ENCODE measurements at regions of chr3 and their contacts with region 1.

Region 1: GRCh38 chr3:138915503-138916498 is 31.1 kb downstream of the FOXL2 start:
- DNase-seq: peak; percentile 79 to 82
- ATAC-seq: peak; percentile 94 to 96
- H3K4me3 ChIP-seq: peak overlapping the region; percentile 76
- H3K27ac ChIP-seq: peak overlapping the region; percentile 95 to 97
- H3K4me1 ChIP-seq: peaks cover 5% of the 10 kb centered on the region; the same call in 1 of the 3 replicates
- CTCF ChIP-seq: peak; percentile 70
- EP300 ChIP-seq: no peak
- POLR2A ChIP-seq: peak; percentile 18; the same call in 1 of the 2 replicates
- RAD21 ChIP-seq: peak; percentile 69 to 77

Region 2: DNA sequence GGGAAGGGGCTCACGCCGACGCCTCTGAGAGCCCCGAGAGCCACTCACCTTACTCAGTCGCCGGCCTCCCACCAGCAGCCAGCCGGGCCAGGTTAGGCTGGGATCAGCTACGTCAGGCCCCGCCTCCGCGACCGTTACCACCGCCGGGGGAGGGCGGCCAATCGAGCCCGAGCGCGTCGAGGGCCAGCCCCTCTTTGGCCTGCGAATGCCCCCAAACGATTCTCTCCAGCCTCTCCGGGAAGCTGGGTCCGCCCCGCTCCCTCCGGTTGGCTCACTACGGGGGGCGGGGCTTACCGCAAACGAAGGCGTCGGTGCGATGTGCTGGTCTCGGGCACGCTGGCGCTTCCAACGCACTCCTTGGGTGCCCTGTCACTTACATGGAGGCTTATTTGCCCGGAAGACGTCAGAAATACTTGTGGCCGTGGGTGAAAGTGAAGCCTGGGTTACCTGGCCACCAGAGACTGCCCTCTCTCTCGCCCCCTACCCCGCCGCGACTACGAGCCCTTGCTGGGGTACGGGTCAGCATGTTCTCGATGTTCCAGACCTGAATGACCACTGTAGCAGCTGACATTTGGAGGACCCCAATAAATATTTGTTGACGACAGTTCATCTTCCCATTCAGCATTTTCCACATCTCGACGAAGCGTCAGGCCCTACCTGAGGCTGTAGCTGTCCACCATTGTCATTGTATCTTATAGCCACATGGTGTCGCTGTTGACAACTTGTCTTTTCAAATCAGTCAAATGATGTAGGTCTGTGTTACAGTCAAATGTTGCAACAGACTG is 321.5 kb before region 1 on chr3 and contains the start of gene CEP70:
- CTCF ChIA-PET with region 1: interaction called, 224 read pairs
- POLR2A ChIA-PET with region 1: interaction called, 28 read pairs
- DNase-seq: peak; percentile 68 to 91
- ATAC-seq: peak; percentile 98 to 99
- H3K4me3 ChIP-seq: peak within 1 kb of the TSS; percentile 79
- H3K27ac ChIP-seq: peak within 1 kb of the TSS; percentile 89 to 92
- H3K4me1 ChIP-seq: peaks cover 23% of the 10 kb centered on the region
- CTCF ChIP-seq: peak; percentile 83
- EP300 ChIP-seq: no peak
- POLR2A ChIP-seq: peak; percentile 57; the same call in 1 of the 2 replicates
- RAD21 ChIP-seq: peak; percentile 75 to 76
- polyA plus RNA-seq, gene CEP70: 9.4 and 17.1 TPM in 2 replicates

Region 3: GRCh38 chr3:138694287-138695007 is 221.4 kb before region 1 on chr3:
- CTCF ChIA-PET with region 1: interaction called, 143 read pairs
- POLR2A ChIA-PET with region 1: interaction called, 9 read pairs
- DNase-seq: peak; percentile 5 to 56
- ATAC-seq: peak; percentile 78 to 82
- H3K4me3 ChIP-seq: no peak overlapping the region
- H3K27ac ChIP-seq: peak overlapping the region; percentile 55 to 73; a peak in 5 of 6 replicates
- H3K4me1 ChIP-seq: peaks cover 22% of the 10 kb centered on the region
- CTCF ChIP-seq: no peak
- EP300 ChIP-seq: no peak; a peak in 1 of 5 replicates
- POLR2A ChIP-seq: no peak
- RAD21 ChIP-seq: no peak

Region 4: DNA sequence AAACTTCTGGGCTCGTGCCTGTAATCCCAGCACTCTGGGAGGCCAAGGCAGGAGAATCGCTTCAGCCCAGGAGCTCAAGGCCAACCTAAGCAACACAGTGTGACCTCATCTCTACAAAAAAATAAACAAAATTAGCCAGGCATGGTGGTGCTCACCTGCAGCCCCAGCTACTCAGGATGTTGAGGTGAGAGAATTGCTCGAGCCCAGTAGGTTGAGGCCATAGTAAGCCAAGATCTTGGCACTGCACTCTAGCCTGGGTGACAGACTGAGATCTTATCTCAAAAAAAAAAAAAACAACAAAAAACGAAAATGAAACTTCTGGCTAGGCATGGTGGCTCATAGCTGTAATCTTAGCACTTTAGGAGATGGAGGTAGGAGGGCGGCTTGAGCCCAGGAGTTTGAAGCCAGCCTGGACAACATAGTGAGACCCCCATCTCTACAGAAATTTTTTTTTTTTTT is 134.8 kb before region 1 on chr3:
- CTCF ChIA-PET with region 1: interaction called, 10 read pairs
- POLR2A ChIA-PET with region 1: no interaction called
- DNase-seq: no peak
- ATAC-seq: no peak
- H3K4me3 ChIP-seq: no peak overlapping the region
- H3K27ac ChIP-seq: no peak overlapping the region
- H3K4me1 ChIP-seq: peaks cover 6% of the 10 kb centered on the region; the same call in 2 of the 3 replicates
- CTCF ChIP-seq: no peak
- EP300 ChIP-seq: no peak
- POLR2A ChIP-seq: no peak
- RAD21 ChIP-seq: no peak

Region 5: DNA sequence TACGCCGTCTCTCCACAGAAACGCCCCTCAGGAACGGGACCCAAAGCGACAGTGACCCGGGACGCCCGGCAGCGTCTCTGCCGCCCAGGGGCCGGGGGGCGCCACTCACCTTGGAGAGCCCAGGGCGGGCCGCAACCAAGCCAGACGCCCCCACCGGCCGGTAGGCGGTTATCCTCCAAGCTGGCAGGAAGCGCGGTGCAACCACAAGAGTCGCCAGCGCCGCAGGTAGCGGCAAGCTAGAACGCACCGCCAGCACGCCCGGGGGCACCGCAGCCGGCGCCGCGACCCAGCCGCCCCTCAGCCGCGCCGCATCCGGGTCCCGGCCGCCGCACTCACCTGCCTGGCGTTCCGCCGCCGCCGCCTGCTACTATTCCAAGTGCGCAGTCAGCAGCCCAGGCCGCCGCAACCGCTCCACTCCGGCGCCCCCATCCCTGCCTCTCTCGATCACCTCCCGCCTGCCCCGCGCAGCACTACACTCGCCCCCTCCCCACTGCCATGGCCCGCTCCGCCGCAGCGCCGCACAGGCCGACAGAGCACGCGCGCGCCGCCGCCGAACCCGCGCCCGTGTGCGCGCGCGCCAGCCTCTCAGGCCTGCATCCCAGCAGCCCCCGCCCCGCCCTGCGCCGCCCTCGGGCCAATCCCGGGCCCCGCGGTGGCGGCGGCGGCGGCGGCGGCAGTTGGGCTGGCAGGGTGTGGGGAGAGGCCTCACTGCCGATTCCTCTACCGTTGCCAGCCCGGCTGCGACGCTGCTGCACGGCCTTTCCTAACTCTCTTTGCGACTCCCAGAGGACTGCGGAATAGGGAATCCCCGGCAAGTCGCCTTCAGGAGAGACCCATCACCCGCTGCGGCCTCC is 81.2 kb before region 1 on chr3 and contains the start of gene PIK3CB:
- CTCF ChIA-PET with region 1: interaction called, 20 read pairs
- POLR2A ChIA-PET with region 1: interaction called, 17 read pairs
- DNase-seq: peak; percentile 60 to 83
- ATAC-seq: peak; percentile 98
- H3K4me3 ChIP-seq: peak within 1 kb of the TSS; percentile 81
- H3K27ac ChIP-seq: peak within 1 kb of the TSS; percentile 91 to 98
- H3K4me1 ChIP-seq: 0 out of 3 replicates have a peak, but pooled peaks cover 4% of the 10 kb centered on the region
- CTCF ChIP-seq: peak; percentile 41
- EP300 ChIP-seq: no peak
- POLR2A ChIP-seq: peak; percentile 79
- RAD21 ChIP-seq: peak; percentile 24 to 40; a peak in 4 of 5 replicates
- polyA plus RNA-seq, gene PIK3CB: 23.3 TPM in 2 replicates

Region 6: GRCh38 chr3:138941259-138941885 is 25.6 kb after region 1 on chr3:
- CTCF ChIA-PET with region 1: interaction called, 82 read pairs
- POLR2A ChIA-PET with region 1: no interaction called
- DNase-seq: peak; percentile 57 to 62
- ATAC-seq: peak; percentile 51 to 83; a peak in 5 of 6 replicates
- H3K4me3 ChIP-seq: no peak overlapping the region
- H3K27ac ChIP-seq: no peak overlapping the region
- H3K4me1 ChIP-seq: no peaks in the 10 kb centered on the region; the same call in 2 of the 3 replicates
- CTCF ChIP-seq: peak; percentile 55
- EP300 ChIP-seq: no peak
- POLR2A ChIP-seq: no peak
- RAD21 ChIP-seq: peak; percentile 44 to 50

Region 7: DNA sequence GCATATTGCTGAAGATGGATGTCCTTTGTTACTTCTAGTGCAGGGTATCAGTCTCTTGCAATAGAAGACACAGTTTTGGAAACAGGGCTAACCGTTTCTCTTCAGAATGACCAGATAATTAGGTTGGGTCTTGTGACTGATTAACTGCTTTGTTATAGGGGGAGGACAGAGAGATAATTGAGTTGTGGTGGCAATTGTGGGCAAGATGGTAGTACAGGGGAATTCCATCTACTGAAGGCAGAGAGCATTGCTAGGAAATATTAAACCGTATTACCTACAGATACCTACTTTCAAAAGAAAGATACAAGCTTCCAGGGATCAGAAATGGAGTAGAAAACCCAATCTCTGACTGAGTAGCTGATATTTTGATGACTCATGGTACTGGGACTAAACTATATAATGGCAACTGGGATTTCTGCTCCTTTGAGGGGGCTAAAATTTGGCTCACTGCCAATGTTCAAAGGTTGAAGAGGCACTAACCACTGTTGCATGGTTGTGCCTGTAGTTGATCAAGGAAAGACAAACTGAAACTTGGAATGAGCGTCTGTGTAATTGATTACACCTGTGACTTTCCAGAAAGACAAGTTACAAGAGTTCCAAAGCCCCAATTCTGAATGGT is 100.7 kb after region 1 on chr3:
- CTCF ChIA-PET with region 1: no interaction called
- POLR2A ChIA-PET with region 1: no interaction called
- DNase-seq: no peak
- ATAC-seq: no peak
- H3K4me3 ChIP-seq: no peak overlapping the region
- H3K27ac ChIP-seq: no peak overlapping the region
- H3K4me1 ChIP-seq: no peaks in the 10 kb centered on the region
- CTCF ChIP-seq: no peak
- EP300 ChIP-seq: no peak
- POLR2A ChIP-seq: no peak
- RAD21 ChIP-seq: no peak